ENCODE measurements at regions of chr1 and their contacts with region 1.

Region 1: GRCh38 chr1:111769517-111770146 is 13.9 kb downstream of the DDX20 start:
- DNase-seq: no peak
- H3K4me3 ChIP-seq: no peak overlapping the region
- H3K27me3 ChIP-seq: no peaks in the 10 kb centered on the region
- CTCF ChIP-seq: peak; percentile 74

Region 2: GRCh38 chr1:111755331-111756123 is 14.1 kb before region 1 on chr1 and contains the start of gene DDX20:
- CTCF ChIA-PET with region 1: interaction called, 31 read pairs
- POLR2A ChIA-PET with region 1: interaction called, 11 read pairs
- DNase-seq: peak; percentile 86
- H3K4me3 ChIP-seq: peak within 1 kb of the TSS; percentile 90
- H3K27me3 ChIP-seq: no peaks in the 10 kb centered on the region
- CTCF ChIP-seq: peak; percentile 72
- polyA plus RNA-seq, gene DDX20: 6.9 and 12.9 TPM in 2 replicates

Region 3: GRCh38 chr1:111895469-111896082 is 125.9 kb after region 1 on chr1:
- CTCF ChIA-PET with region 1: no interaction called
- POLR2A ChIA-PET with region 1: no interaction called
- DNase-seq: no peak
- H3K4me3 ChIP-seq: no peak overlapping the region
- H3K27me3 ChIP-seq: no peaks in the 10 kb centered on the region
- CTCF ChIP-seq: no peak

Measured in BJ (cell line).